ENCODE measurements at regions of chr5 and their contacts with region 1.

Region 1: GRCh38 chr5:179060116-179061008 is at the start of gene ZNF354C:
- DNase-seq: peak; percentile 79 to 92 (median 87)
- ATAC-seq: peak; percentile 98
- H3K4me3 Mint-ChIP-seq: peak within 1 kb of the TSS; percentile 89 to 97 (median 96)
- H3K27ac Mint-ChIP-seq: peak within 1 kb of the TSS; percentile 79 to 97 (median 94)
- H3K4me1 Mint-ChIP-seq: peaks cover 13 to 39% (median 29%) of the 10 kb centered on the region in 4 donors
- H3K27me3 Mint-ChIP-seq: peaks cover 0 to 9% (median 3%) of the 10 kb centered on the region in 5 donors
- polyA plus RNA-seq, gene ZNF354C: 1.1 to 1.8 (median 1.6) TPM

Region 2: DNA sequence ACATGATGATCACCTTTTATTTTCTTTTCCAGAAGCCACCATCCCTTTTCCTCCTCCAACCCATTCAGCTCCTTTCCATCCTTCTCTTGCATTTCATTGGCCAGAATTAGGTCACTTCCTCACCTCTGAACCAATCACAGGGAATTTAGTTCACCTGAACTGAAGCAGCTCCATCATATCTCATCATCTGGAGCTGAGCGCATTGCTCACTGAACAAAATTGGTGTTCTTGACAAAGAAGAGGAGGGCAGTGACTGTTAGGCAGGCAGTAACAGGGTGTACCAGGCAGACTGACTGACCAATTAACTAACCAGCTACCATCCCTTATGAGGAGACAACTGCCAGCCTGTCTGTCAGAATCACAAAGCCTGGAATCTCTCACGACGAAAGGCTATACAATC is 328.1 kb before region 1 on chr5:
- POLR2A ChIA-PET with region 1: interaction called, 12 read pairs
- DNase-seq: no peak
- ATAC-seq: no peak
- H3K4me3 Mint-ChIP-seq: peak overlapping the region in 2 of 10 donors; percentile 13 to 32
- H3K27ac Mint-ChIP-seq: peak overlapping the region in 2 of 10 donors; percentile 58 to 72
- H3K4me1 Mint-ChIP-seq: peaks cover 4 to 14% (median 8%) of the 10 kb centered on the region in 4 donors
- H3K27me3 Mint-ChIP-seq: peaks cover 0 to 1% (median 0%) of the 10 kb centered on the region in 5 donors

Region 3: DNA sequence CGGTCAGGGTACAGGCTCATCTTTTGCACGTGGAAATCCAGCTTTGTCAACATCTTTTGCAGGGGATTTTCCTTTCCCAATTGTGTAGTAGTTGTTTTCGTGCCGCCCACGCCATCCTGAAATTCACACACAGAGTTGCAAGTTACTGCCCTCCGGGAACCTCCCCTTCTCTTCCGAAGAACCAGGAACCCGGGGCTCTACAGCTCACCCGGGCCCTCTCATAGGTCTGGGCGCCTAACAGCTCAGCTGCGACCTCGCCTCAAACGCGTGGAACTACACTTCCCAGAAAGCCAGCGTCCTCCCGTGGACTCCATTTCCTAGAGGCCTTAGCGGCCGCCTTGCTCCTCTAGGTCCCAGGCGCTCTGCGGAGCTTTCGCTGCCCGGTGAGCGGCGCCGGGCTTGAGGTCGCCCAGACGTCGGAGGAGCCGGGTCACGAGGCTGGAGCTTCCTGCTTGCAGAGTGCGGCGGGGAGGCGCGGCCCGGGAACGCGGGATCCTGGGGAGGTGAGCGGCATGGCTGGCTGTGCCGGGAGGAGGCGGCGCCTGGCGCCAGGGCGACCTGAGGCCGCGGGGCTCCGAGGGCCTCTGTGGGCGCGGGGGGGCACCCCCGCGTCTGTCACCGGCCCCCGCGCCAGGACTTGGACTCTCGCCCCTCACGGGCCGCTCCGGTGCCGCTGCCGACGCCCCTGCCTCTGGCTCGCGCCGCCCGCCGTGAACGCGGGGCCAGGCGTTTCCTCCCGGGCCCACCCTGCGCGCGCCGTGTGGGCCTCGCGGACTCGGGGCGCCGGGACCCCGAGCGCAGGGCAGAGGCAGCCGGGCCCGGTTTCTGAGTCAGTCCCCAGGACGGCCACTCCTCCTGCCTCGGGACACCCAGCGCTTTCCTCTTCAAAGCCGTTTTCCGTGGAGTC is 200.5 kb before region 1 on chr5 and contains the start of gene ZNF354B:
- POLR2A ChIA-PET with region 1: interaction called, 35 read pairs
- DNase-seq: peak; percentile 60 to 91 (median 82)
- ATAC-seq: peak; percentile 95 to 96
- H3K4me3 Mint-ChIP-seq: peak within 1 kb of the TSS; percentile 83 to 96 (median 90)
- H3K27ac Mint-ChIP-seq: peak within 1 kb of the TSS; percentile 80 to 97 (median 91)
- H3K4me1 Mint-ChIP-seq: peaks cover 16 to 34% (median 29%) of the 10 kb centered on the region in 4 donors
- H3K27me3 Mint-ChIP-seq: peaks cover 0 to 10% (median 0%) of the 10 kb centered on the region in 5 donors
- polyA plus RNA-seq, gene ZNF354B: 3.3 to 5.9 (median 3.5) TPM

Region 4: DNA sequence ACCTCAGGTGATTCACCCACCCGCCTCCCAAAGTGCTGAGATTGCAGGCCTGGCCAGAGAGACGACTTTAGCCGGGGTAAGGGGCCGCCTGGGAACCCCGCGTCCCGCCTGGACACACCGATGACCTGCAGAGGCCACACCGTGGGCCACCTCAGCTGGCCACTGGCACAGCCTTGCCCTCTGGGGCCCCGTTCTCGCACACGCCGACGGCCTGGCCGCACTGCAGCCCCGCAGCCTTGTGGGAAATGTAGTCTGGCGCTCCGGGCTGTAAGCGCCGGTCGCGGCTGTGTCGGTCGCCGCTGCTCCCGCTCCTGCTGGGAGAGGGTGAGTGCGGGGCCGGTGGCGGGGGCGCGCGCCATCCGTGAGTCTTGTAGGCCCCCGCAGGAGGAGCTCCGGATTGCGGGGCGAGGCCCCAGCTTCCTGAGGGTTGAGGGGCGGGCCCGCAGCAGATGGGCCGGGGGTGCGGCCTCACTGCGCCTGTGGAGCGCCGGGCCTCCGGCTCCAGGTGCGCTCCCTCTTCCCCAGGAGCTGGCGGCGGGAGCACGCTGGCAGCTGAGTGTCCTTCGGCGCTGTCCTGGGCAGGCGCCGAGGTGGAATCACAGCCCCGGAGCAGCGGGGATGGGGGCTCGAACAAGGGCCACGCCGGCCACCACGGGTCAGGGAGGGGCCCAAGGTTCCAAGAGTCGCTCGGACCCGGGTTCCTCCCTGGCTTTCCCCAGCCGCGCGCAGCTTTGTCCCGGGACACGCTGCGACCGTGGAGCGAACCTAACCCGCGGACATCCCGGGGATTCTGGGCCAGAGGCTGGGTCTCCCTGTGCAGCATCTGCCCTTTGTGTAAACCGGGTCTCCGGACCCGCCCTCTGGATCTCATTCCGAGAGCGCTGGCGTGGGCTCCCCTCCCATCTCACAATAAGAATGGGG is 164.5 kb before region 1 on chr5 and contains the start of gene ZFP2:
- POLR2A ChIA-PET with region 1: interaction called, 11 read pairs
- DNase-seq: peak in 9 of 10 donors; percentile 3 to 65 (median 15)
- ATAC-seq: peak; percentile 84 to 88
- H3K4me3 Mint-ChIP-seq: peak within 1 kb of the TSS; percentile 76 to 91 (median 88)
- H3K27ac Mint-ChIP-seq: peak within 1 kb of the TSS in 6 of 10 donors; percentile 43 to 85 (median 65)
- H3K4me1 Mint-ChIP-seq: peaks cover 0 to 15% (median 6%) of the 10 kb centered on the region in 4 donors
- H3K27me3 Mint-ChIP-seq: peaks cover 0 to 12% (median 0%) of the 10 kb centered on the region in 5 donors
- polyA plus RNA-seq, gene ZFP2: 0.21 to 0.69 (median 0.43) TPM

Region 5: DNA sequence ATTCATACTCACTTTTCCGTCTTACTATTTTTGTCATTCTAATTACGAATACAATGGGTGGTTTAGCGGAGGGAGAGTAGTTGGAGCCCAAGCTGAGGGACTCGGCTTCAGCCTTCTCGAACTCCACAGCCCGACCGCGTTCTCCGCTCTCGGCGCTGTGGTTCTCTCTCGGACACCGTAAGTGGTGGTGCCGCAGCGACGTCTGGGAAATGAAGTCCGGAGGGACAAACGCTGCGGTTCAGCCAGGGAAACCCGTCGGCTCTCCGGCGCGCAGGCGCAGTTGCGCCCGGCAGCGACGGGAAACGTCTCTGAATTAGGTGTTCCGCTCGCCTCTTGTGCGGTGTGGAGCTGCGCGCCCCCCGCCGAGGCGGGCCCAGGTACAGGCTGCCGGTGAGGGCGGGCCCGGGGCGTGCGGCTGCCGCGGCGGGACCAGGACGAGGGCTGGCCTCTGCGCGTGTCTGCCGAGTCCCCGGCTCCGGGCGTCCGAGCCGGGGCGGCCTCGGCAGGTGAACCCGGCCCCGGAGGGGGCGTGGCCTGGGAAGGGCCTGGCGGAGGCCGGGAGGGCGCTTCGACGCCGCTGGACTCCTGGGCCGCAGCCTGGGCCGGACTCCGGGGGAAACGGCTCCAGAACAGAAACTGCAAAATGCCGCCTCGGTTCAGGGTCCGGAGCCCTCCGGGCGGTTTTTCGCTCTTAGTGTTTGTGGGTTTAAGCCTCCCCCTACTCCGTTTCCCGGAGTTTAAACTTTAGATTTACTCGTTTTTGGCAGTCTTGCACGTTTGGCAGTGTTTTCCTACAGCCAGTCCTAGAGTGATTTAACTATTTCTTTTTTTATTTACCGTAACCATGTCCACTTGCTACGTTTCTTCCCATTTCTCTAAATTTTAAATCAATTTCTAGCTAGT is 36.6 kb before region 1 on chr5 and contains the start of gene ZNF879:
- POLR2A ChIA-PET with region 1: interaction called, 19 read pairs
- DNase-seq: peak; percentile 86 to 97 (median 94)
- ATAC-seq: peak; percentile 94 to 95
- H3K4me3 Mint-ChIP-seq: peak within 1 kb of the TSS; percentile 87 to 99 (median 98)
- H3K27ac Mint-ChIP-seq: peak within 1 kb of the TSS; percentile 87 to 96 (median 91)
- H3K4me1 Mint-ChIP-seq: peaks cover 3 to 17% (median 13%) of the 10 kb centered on the region in 4 donors
- H3K27me3 Mint-ChIP-seq: peaks cover 0 to 3% (median 0%) of the 10 kb centered on the region in 5 donors
- polyA plus RNA-seq, gene ZNF879: 2.5 to 4.1 (median 3.3) TPM

Measured in naive thymus-derived CD8-positive, alpha-beta T cell (primary cell).